ENCODE measurements at regions of chr4 and their contacts with region 1.

Region 1: DNA sequence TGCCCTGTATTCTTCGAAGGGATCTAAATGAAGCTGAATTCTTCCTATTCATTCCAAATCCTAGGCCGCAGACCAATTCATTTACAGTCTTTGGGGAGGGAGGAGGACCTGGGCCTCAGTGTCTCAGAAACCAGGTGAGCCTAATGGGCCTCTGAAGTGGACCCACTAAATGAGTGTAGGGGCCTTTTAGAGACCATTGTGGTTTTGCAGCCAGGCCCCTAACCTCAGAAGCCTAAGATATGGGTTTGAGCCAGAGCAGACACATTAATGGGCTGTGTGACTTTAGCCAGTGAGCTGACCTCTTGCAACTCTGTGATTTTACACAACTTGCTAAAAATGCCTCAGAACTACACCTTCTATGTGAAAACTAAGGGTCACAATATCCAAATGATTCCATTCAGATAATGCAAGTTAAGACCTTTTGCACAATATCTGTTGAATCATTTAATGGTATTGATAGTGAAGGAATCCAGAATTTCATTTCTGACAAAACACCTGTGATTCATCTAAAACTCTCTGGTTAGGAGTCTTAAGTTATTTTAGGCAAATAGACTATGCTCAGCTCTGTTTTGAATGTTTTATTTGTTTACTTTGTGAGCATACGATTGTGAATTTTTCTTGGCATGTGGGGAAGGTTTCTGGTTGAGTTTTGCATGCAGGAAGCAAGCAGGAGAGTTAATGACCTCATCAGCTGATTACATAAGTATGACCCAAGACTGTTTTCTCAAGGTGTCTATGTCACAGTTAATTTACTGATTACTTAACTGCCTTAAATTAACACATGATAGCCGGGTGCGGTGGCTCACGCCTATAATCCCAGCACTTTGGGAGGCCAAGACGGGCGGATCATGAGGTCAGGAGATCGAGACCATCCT is 75.0 kb downstream of the EVC start:
- DNase-seq: peak; percentile 86
- ATAC-seq: peak; percentile 84
- H3K4me3 ChIP-seq: no peak overlapping the region
- H3K27ac ChIP-seq: peak overlapping the region; percentile 89
- H3K4me1 ChIP-seq: peaks cover 13% of the 10 kb centered on the region
- H3K27me3 ChIP-seq: no peaks in the 10 kb centered on the region
- CTCF ChIP-seq: no peak

Region 2: DNA sequence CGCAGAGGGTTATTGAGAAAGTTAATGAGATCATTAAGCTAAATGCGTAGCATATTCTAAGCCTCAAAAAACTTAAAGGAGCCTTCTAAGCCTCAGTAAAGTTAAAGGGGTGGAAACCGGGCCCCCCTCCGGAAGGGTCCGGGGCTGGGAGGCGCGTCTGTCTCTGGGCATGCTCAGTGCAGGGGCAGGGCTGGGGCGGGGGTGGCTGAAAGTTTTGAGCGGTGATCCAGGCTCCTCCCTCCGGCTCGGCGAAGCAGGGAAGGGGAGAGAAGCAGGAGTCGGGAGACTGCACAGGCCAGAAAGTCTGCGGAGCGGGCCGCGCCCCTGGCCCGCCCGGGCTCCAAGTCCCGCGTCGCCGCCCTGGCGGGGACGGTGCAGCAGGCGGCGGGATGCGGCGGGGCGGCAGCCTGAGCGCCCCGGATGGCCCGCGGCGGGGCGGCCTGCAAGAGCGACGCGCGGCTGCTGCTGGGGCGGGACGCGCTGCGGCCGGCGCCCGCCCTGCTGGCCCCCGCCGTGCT is 75.0 kb before region 1 on chr4 and contains the start of gene EVC:
- CTCF ChIA-PET with region 1: no interaction called
- POLR2A ChIA-PET with region 1: no interaction called
- intact Hi-C with region 1: loop called (anchors 2 kb)
- DNase-seq: peak; percentile 70
- ATAC-seq: peak; percentile 80
- H3K4me3 ChIP-seq: peak within 1 kb of the TSS; percentile 71
- H3K27ac ChIP-seq: peak within 1 kb of the TSS; percentile 68
- H3K4me1 ChIP-seq: peaks cover 34% of the 10 kb centered on the region
- H3K27me3 ChIP-seq: no peaks in the 10 kb centered on the region
- CTCF ChIP-seq: no peak
- total RNA-seq, gene EVC: 22.7 and 29.9 TPM in 2 replicates

Region 3: DNA sequence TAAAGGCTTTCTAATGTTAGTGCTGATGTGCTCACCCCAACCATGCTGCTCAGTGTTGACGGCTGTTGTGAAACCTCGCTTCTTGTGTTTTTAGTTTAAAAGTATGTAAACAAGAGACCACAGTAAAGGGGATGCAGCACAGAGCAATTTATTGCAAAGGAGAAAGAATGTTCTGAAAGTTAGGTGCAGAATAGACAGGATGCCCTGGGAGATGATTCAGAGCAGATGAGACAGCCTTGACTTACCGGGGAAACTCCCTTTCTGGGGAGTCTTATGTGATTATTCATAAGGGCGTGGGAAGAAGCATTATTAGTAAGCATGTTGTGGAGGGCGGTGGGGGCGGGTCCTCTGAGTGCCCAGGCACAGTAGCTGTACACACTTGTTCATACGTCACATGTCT is 27.3 kb before region 1 on chr4:
- CTCF ChIA-PET with region 1: no interaction called
- POLR2A ChIA-PET with region 1: no interaction called
- intact Hi-C with region 1: loop called (anchors 2 kb)
- DNase-seq: peak; percentile 93
- ATAC-seq: peak; percentile 94
- H3K4me3 ChIP-seq: no peak overlapping the region
- H3K27ac ChIP-seq: peak overlapping the region; percentile 96
- H3K4me1 ChIP-seq: peaks cover 31% of the 10 kb centered on the region
- H3K27me3 ChIP-seq: no peaks in the 10 kb centered on the region
- CTCF ChIP-seq: no peak